Activated naive CD4-positive, alpha-beta T cell treated with anti-CD3 and anti-CD28 coated beads, Interleukin-2, amount 10 ng/mL, durations not matched to agents 7 days and 5 days (primary cell): ENCODE measurements at regions of chr6 and their contacts with region 1.

Region 1: DNA sequence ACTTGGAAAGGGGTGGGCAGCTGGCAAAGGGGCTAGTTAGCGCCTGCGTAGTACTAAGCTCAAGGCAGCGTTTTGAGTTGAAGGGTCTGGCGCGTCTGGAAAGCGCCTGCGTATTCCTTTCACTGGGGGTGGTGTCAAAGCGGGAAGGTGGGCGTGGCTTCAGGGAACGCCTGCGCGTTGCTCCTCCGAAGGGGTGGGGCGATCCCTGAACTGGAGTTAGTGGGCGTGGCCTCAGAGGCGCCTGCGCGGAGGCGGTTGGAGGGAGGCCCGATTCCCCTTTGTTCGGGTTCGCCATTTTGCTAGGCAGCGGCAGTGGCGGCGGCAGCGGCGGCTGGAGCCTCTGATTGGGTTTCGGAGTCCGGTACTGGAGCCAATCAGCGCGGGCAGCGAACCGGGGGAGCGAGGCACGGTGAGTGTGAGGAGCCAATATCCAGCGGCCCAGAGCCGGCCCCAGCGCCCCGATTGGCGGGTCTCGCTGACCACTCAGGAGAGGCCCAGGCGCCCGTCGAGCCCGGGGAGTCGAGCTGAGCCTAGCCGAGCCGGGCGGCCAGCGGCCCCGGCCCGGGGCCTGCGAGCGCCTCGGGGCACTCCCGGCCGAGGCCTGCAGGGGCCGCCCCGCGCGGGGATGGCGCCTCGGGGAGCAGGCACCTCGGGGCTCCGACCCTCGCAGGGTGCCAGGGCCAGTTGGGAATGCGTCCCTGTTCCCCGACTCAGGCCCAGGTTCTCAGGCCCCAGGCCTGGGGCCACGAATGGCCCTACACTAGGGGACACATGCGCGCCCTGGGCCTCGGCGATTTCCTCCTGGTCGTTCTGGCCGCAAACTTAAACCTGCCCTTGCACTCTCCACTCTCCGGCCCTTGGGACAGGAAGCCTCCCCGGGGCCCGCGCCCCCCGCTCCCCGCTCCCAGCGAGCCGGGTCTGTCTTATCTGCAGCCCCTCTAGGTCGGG is at the start of gene NFYA:
- DNase-seq: peak; percentile 100
- H3K4me3 Mint-ChIP-seq: peak within 1 kb of the TSS; percentile 91
- H3K27ac Mint-ChIP-seq: peak within 1 kb of the TSS; percentile 99
- H3K4me1 Mint-ChIP-seq: peaks cover 65% of the 10 kb centered on the region
- H3K27me3 Mint-ChIP-seq: no peaks in the 10 kb centered on the region

Region 2: GRCh38 chr6:41051873-41052272 is 21.1 kb before region 1 on chr6:
- CTCF ChIA-PET with region 1: interaction called, 16 read pairs
- DNase-seq: no peak
- H3K4me3 Mint-ChIP-seq: no peak overlapping the region
- H3K27ac Mint-ChIP-seq: peak overlapping the region; percentile 79
- H3K4me1 Mint-ChIP-seq: peaks cover 21% of the 10 kb centered on the region
- H3K27me3 Mint-ChIP-seq: no peaks in the 10 kb centered on the region

Region 3: GRCh38 chr6:41059556-41059955 is 13.4 kb before region 1 on chr6:
- CTCF ChIA-PET with region 1: interaction called, 16 read pairs
- DNase-seq: no peak
- H3K4me3 Mint-ChIP-seq: no peak overlapping the region
- H3K27ac Mint-ChIP-seq: no peak overlapping the region
- H3K4me1 Mint-ChIP-seq: peaks cover 10% of the 10 kb centered on the region
- H3K27me3 Mint-ChIP-seq: no peaks in the 10 kb centered on the region

Region 4: DNA sequence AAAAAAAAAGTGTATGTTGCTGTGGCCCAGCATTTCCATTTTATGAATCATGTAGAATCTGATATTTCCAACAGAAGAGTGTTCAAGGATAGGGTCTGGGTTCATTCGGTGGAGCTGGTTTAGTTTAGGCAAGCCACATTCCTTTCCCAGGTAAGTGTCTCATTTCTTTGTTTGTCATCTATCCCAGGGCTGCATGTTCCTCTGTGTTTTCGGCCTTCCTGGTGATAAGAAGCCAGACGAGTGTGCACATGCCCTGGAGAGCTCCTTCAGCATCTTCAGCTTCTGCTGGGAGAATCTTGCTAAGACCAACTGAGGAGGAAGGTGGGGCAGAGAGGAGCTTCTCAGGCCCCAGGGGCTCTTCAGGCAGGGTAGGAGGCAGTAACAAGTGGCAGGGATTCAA is 38.1 kb after region 1 on chr6:
- CTCF ChIA-PET with region 1: no interaction called
- DNase-seq: no peak
- H3K4me3 Mint-ChIP-seq: no peak overlapping the region
- H3K27ac Mint-ChIP-seq: no peak overlapping the region
- H3K4me1 Mint-ChIP-seq: no peaks in the 10 kb centered on the region
- H3K27me3 Mint-ChIP-seq: no peaks in the 10 kb centered on the region